Left ventricle myocardium superior (tissue), 1 donor: ENCODE measurements at regions of chr4 and their contacts with region 1.

Region 1: GRCh38 chr4:173257732-173258717 is 76.1 kb downstream of the HMGB2 start:
- DNase-seq: peak; percentile 62
- ATAC-seq: peak; percentile 92

Region 2: GRCh38 chr4:173013232-173013930 is 244.6 kb before region 1 on chr4:
- intact Hi-C with region 1: loop called (anchors 5 kb)
- DNase-seq: no peak
- ATAC-seq: peak; percentile 75

Region 3: GRCh38 chr4:173025131-173025530 is 232.9 kb before region 1 on chr4:
- intact Hi-C with region 1: loop called (anchors 5 kb)
- DNase-seq: no peak
- ATAC-seq: peak; percentile 80